ENCODE measurements at regions of chr19 and their contacts with region 1.

Region 1: DNA sequence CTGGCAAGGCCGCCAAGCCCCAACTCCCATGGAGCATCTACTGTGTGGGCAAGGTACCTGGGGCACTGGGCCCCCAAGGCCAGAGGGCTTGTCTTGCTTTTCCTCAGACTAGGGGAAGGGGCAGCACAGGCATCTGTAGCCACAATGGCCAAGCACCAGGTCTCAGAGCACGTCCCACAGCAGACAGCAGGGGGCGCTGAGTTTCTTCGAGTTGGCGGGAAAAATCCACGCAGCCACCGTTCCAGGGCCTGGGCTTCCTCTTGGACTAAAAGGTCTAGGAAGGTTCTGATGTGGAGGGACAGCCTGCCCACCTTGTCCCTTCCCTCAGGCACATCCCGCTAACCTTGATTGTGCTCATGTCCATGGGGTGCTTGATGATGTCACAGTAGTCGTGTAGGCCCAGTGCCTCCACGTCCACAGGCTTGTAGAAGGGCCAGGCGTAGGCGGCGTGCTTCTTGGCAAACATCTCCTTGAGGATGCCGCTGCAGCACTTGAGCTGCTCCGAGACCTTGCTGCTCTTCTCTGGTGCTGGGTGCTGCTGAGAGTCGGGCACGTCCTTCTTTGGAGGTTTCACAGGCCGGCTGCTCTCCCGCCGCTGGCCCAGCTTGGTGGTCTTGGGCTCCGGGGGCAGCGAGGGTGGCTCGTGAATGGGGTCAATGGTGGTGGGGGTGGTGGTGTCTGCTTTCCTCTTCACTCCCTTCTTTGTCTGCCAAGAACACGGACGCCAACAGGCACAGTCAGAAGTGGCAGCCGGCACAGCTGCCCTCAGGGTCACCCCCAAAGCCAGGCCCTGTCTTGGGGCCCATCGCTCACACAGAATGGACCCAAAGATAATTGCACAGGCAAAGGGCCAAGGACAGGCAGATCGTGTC is 32.0 kb upstream of the EPHX3 start:
- DNase-seq: peak; percentile 51
- H3K4me3 ChIP-seq: no peak overlapping the region
- H3K27ac ChIP-seq: no peak overlapping the region
- H3K4me1 ChIP-seq: peaks cover 11% of the 10 kb centered on the region
- H3K27me3 ChIP-seq: no peaks in the 10 kb centered on the region
- CTCF ChIP-seq: peak; percentile 73 to 85
- POLR2A ChIP-seq: no peak

Region 2: DNA sequence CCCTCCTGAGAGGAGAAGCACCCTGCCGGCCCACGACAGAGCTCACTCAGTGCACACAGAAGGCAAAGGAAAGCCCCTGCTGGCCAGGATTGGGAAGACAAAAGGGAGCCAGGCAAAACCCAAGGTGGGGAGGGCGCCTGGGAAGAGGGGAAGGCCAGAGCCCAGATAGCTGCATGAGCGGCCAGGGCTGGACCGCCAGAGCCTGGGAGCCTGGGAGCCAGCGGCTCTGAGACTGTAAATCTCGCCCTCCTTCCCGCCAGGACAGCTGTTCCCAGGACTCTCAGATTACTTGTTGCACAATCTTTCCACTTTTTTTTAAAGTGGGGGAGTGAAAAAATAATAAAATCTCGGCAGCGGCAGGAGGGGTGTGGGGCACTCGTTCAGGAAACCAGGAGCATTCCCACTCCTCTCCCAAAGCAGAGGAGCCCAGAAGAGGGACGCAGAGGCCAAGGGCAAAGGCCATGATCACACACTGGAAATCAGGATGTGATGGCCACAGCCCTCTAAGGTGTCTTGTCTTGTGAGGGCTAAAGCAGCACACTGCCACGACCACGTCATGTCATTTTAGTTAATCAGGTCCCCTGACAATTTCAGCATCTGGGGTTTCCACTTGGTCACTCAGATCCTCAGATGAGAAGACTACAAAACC is 12.4 kb before region 1 on chr19:
- CTCF ChIA-PET with region 1: interaction called, 15 read pairs
- POLR2A ChIA-PET with region 1: interaction called, 3 read pairs
- dilution Hi-C with region 1: no loop called
- intact Hi-C with region 1: no loop called
- DNase-seq: peak; percentile 73
- H3K4me3 ChIP-seq: no peak overlapping the region
- H3K27ac ChIP-seq: peak overlapping the region; percentile 69
- H3K4me1 ChIP-seq: peaks cover 42% of the 10 kb centered on the region
- H3K27me3 ChIP-seq: no peaks in the 10 kb centered on the region
- CTCF ChIP-seq: peak; percentile 56 to 60
- POLR2A ChIP-seq: no peak

Region 3: DNA sequence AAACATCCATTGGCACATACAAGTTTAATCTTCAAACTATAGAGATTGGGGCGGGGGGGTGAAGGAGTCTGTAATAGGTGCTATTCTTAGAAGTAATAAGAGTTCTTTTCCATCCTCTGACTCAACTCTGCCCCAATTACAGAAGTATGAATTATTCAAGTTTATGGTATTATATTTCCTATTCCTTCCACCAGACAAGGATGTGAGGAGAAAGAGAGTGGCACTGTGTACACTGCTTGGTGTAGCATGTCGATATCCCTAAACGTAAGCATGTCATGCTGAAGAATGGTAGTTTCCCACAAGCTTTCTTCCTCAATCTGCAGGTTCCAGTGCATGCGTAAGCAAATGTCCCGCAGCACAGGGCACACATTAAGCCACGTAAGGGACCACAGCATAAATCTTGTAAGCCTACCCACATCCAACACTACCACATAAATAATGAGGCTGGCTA is 54.0 kb after region 1 on chr19:
- CTCF ChIA-PET with region 1: interaction called, 3 read pairs
- POLR2A ChIA-PET with region 1: interaction called, 11 read pairs
- dilution Hi-C with region 1: no loop called
- intact Hi-C with region 1: no loop called
- DNase-seq: no peak
- H3K4me3 ChIP-seq: no peak overlapping the region
- H3K27ac ChIP-seq: no peak overlapping the region
- H3K4me1 ChIP-seq: peaks cover 8% of the 10 kb centered on the region
- H3K27me3 ChIP-seq: no peaks in the 10 kb centered on the region
- CTCF ChIP-seq: no peak
- POLR2A ChIP-seq: no peak

Region 4: DNA sequence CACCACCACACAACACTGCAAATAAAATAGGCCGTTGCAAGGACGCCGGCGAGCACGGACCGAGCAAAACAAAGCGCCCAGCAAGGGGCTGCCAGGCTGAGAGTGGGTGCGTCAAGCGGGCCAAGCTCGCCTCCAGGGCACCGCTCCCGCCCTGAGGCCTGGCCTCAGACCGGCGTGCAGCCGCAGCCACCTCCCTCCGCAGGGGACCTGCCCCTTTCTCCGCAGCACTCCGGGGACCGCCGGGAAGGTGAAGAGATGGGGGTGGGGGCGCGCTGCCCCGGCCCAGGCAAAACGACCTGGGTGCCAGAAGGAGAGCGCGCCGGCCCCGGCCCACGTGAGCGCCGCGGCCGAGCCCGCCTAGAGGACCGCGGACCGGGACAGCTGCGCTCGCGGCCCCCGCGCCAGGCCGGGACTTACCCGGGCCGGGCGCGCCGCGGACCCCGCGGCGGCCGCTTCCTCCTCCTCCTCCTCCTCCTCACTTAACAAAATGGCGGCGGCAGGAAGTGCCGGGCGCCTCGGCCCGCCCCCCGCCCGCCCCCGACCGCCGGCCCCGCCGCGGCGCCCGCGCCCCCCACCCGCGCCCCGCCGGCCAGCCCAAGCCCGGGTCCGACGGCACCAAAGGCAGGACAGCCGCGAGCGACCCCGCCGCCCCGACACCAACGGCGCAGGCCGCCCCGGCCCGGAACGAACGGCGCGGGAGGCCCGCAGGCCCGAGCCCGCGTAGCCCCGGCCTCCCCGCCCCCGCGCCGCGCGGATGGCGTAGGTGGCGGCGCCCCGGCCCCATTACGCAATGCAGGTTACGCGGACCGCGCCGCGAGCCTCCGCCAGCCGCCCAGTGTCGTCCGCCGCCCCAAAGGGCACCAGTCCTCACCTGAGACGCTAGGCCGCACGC is 67.4 kb after region 1 on chr19:
- CTCF ChIA-PET with region 1: interaction called, 4 read pairs
- POLR2A ChIA-PET with region 1: no interaction called
- dilution Hi-C with region 1: no loop called
- intact Hi-C with region 1: loop called (anchors 1 kb)
- DNase-seq: no peak
- H3K4me3 ChIP-seq: peak overlapping the region; percentile 74 to 92 (median 82)
- H3K27ac ChIP-seq: peak overlapping the region; percentile 86
- H3K4me1 ChIP-seq: peaks cover 24% of the 10 kb centered on the region
- H3K27me3 ChIP-seq: no peaks in the 10 kb centered on the region
- CTCF ChIP-seq: no peak
- POLR2A ChIP-seq: no peak

Region 5: GRCh38 chr19:15379083-15379995 is 115.0 kb after region 1 on chr19 and contains the start of gene AKAP8:
- CTCF ChIA-PET with region 1: interaction called, 9 read pairs
- POLR2A ChIA-PET with region 1: no interaction called
- dilution Hi-C with region 1: no loop called
- intact Hi-C with region 1: loop called (anchors 1 kb)
- DNase-seq: peak; percentile 99
- H3K4me3 ChIP-seq: peak within 1 kb of the TSS; percentile 82 to 90 (median 85)
- H3K27ac ChIP-seq: peak within 1 kb of the TSS; percentile 85
- H3K4me1 ChIP-seq: peaks cover 20% of the 10 kb centered on the region
- H3K27me3 ChIP-seq: no peaks in the 10 kb centered on the region
- CTCF ChIP-seq: no peak
- POLR2A ChIP-seq: peak; percentile 85
- total RNA-seq, gene AKAP8: 42.6 and 44.1 TPM in 2 replicates

Region 6: GRCh38 chr19:15393963-15394362 is 129.7 kb after region 1 on chr19:
- CTCF ChIA-PET with region 1: no interaction called
- POLR2A ChIA-PET with region 1: no interaction called
- dilution Hi-C with region 1: no loop called
- intact Hi-C with region 1: no loop called
- DNase-seq: no peak
- H3K4me3 ChIP-seq: no peak overlapping the region
- H3K27ac ChIP-seq: no peak overlapping the region
- H3K4me1 ChIP-seq: no peaks in the 10 kb centered on the region
- H3K27me3 ChIP-seq: no peaks in the 10 kb centered on the region
- CTCF ChIP-seq: no peak
- POLR2A ChIP-seq: no peak